Prostate gland (tissue), 2 donors: ENCODE measurements at regions of chr6 and their contacts with region 1.

Region 1: GRCh38 chr6:106979427-106979884 is 4.9 kb upstream of the CD24 start:
- DNase-seq: peak; percentile 88
- H3K4me3 ChIP-seq: no peak overlapping the region
- H3K27ac ChIP-seq: no peak overlapping the region
- H3K4me1 ChIP-seq: no peaks in the 10 kb centered on the region
- H3K27me3 ChIP-seq: no peaks in the 10 kb centered on the region
- CTCF ChIP-seq: peak; percentile 81 to 98 (median 92)
- POLR2A ChIP-seq: no peak

Region 2: GRCh38 chr6:106339334-106340029 is 640.0 kb before region 1 on chr6:
- intact Hi-C with region 1: loop called (anchors 10 kb)
- DNase-seq: peak; percentile 57
- H3K4me3 ChIP-seq: no peak overlapping the region
- H3K27ac ChIP-seq: no peak overlapping the region
- H3K4me1 ChIP-seq: no peaks in the 10 kb centered on the region
- H3K27me3 ChIP-seq: no peaks in the 10 kb centered on the region
- CTCF ChIP-seq: peak in 3 of 4 experiments; percentile 64 to 67 (median 67)
- POLR2A ChIP-seq: no peak

Region 3: GRCh38 chr6:106444777-106445507 is 534.5 kb before region 1 on chr6:
- intact Hi-C with region 1: loop called (anchors 5 kb)
- DNase-seq: peak; percentile 47
- H3K4me3 ChIP-seq: no peak overlapping the region
- H3K27ac ChIP-seq: peak overlapping the region in 1 of 2 donors; percentile 78
- H3K4me1 ChIP-seq: peaks cover 15% of the 10 kb centered on the region
- H3K27me3 ChIP-seq: no peaks in the 10 kb centered on the region
- CTCF ChIP-seq: peak; percentile 76 to 86 (median 80)
- POLR2A ChIP-seq: no peak

Region 4: DNA sequence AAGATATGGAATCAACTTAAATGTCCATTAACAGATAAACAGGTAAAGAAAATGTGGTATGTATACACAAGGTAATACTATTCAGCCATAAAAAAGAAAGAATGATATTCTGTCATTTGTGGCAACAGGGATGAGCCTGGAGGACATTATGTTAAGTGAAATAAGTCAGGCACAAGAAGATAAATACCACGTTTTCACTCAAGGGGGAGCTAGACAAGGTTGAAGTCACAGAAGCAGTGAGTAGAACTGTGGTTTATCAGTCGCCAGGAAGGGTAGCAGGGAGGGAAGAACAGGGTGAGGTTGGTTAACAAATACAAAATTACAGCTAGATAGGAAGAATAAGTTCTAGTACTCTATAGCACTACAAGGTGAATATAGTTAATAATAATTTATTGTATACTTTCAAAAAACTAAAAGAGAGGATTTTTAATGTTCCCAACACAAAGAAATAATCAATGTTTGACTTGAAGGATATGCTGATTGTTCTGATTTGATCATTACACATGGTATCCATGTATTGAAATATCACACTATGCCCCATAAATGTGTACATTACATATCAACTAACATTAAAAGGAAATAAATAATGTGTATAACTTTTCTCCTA is 371.3 kb before region 1 on chr6:
- intact Hi-C with region 1: loop called (anchors 10 kb)
- DNase-seq: peak; percentile 31
- H3K4me3 ChIP-seq: no peak overlapping the region
- H3K27ac ChIP-seq: no peak overlapping the region
- H3K4me1 ChIP-seq: no peaks in the 10 kb centered on the region
- H3K27me3 ChIP-seq: no peaks in the 10 kb centered on the region
- CTCF ChIP-seq: peak; percentile 8 to 67 (median 43)
- POLR2A ChIP-seq: no peak